Left cardiac atrium (tissue), 4 donors: ENCODE measurements at regions of chr6 and their contacts with region 1.

Region 1: GRCh38 chr6:17392978-17393891 is at the start of gene CAP2:
- DNase-seq: peak; percentile 65
- ATAC-seq: peak; percentile 92
- total RNA-seq, gene CAP2: 69.6 to 79.5 TPM

Region 2: DNA sequence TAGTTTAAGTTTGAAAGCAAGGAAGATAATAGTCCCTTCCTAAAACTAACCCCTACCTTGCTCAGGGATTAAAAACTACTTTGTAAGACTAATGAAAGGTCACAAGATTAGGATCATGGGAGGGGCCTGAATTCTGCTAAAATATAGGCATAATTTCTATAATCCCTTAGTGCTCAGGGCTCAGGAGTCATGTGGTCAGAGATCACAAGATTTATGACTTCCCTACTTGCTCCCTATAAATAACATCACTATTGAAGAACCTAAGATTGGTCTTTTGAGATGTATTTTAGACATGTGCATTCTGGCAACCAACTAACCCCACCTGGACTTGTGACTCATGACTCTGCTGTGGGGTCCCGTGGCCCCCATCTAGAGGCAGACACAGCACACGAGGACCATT is 210.3 kb before region 1 on chr6:
- intact Hi-C with region 1: no loop called
- DNase-seq: no peak
- ATAC-seq: no peak

Region 3: DNA sequence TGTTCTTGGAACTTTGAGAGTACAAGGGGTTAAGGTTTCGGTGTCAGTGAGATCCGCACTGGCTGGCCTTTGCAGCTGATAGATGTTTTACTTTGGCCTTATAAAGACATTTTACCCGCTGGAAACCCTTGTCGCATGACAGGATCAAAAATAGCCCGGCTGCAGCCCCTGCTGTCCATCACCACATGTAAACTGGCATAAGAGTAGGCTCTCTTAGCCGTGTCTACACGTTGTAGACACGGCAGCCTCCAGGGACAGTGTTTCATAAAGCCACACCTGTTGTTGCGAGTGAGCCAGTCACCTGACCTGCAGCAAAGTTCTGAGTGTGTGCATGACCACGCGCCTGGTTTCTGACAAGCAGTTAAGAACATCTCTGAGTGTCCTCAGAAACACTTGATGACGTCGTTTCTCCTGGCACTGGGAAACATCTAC is 103.6 kb before region 1 on chr6:
- intact Hi-C with region 1: loop called in 1 of 2 experiments (anchors 10 kb)
- DNase-seq: peak; percentile 72
- ATAC-seq: peak; percentile 89 to 91

Region 4: DNA sequence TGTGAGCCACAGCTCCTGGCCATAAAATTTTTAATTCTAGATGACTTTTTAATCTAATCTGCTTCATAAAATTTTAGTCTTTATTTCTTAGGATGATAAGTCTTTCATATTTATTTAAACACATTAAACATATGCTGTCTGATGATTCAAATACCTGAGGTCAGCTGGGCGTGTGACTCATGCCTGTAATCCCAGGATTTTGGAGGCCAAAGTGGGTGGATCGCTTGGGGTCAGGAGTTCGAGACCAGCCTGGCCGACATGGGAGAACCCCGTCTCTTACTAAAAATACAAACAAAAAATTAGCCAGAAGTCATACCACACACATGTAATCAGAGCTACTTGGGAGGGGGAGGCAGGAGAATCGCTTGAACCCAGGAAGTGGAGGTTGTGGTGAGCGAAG is 59.0 kb before region 1 on chr6:
- intact Hi-C with region 1: no loop called
- DNase-seq: no peak
- ATAC-seq: no peak